ENCODE measurements at regions of chr14 and their contacts with region 1.

Region 1: GRCh38 chr14:21510735-21511657 is at the start of gene METTL3:
- DNase-seq: peak; percentile 96
- H3K4me3 Mint-ChIP-seq: peak within 1 kb of the TSS; percentile 96
- H3K27ac Mint-ChIP-seq: peak within 1 kb of the TSS; percentile 96
- H3K4me1 Mint-ChIP-seq: peaks cover 30% of the 10 kb centered on the region
- H3K27me3 Mint-ChIP-seq: no peaks in the 10 kb centered on the region
- total RNA-seq, gene METTL3: 60.6 TPM

Region 2: GRCh38 chr14:21383848-21384493 is 127.0 kb before region 1 on chr14 and contains the start of gene SUPT16H:
- CTCF ChIA-PET with region 1: no interaction called
- intact Hi-C with region 1: loop called (anchors 1 kb)
- DNase-seq: peak; percentile 97
- H3K4me3 Mint-ChIP-seq: peak within 1 kb of the TSS; percentile 98
- H3K27ac Mint-ChIP-seq: peak within 1 kb of the TSS; percentile 99
- H3K4me1 Mint-ChIP-seq: peaks cover 34% of the 10 kb centered on the region
- H3K27me3 Mint-ChIP-seq: no peaks in the 10 kb centered on the region
- total RNA-seq, gene SUPT16H: 164 to 165 TPM

Region 3: GRCh38 chr14:21437063-21437901 is 73.7 kb before region 1 on chr14:
- CTCF ChIA-PET with region 1: no interaction called
- intact Hi-C with region 1: loop called (anchors 1 kb)
- DNase-seq: peak; percentile 100
- H3K4me3 Mint-ChIP-seq: peak overlapping the region; percentile 84
- H3K27ac Mint-ChIP-seq: peak overlapping the region; percentile 90
- H3K4me1 Mint-ChIP-seq: peaks cover 52% of the 10 kb centered on the region
- H3K27me3 Mint-ChIP-seq: no peaks in the 10 kb centered on the region

Region 4: DNA sequence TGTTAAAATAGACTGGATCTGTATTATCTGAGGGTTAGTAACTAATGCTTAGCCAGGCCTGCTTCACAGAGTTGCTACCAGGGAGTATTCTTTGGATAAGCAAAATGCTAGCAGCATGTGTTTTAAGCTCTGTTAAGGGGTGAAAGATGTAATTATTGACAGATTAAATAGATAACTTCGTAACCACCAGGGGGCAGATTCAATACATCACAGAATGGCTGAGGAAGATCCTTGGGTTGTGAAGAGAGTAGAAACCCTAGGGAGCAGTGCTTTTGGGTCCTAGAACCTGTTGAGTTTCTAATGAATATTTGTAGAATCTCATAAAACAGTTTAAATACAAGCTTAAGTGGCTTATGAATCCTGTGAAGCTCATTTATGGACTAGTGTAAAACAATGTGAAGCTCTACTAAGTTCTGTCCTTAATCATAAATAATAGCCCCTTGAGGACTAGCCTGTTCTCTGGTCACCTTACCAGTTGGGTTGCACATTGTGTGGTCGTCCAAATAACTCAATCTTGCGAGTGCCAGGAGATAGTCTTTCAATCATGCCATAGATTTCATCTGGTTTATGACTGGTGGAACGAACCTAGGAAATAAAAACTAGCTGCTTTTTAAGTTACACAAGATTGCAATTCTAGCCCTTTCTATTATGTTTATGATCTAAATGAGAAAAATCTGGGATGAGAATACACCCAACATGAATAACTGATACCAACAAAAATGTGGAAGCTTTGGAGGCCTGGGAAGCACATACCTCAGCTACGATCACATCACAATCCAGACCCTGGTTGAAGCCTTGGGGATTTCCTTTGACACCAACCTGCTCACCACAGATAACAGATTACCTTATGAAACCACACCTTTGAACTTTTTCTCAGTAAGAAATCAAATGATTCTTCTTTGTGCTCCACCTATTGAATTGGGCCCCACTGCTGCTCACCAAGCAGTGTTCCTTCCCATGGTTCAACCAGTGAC is 12.2 kb before region 1 on chr14:
- CTCF ChIA-PET with region 1: interaction called, 44 read pairs
- intact Hi-C with region 1: no loop called
- DNase-seq: peak; percentile 32
- H3K4me3 Mint-ChIP-seq: no peak overlapping the region
- H3K27ac Mint-ChIP-seq: peak overlapping the region; percentile 51
- H3K4me1 Mint-ChIP-seq: peaks cover 18% of the 10 kb centered on the region
- H3K27me3 Mint-ChIP-seq: no peaks in the 10 kb centered on the region

Region 5: GRCh38 chr14:21557084-21557901 is 46.3 kb after region 1 on chr14:
- CTCF ChIA-PET with region 1: interaction called, 5 read pairs
- intact Hi-C with region 1: loop called (anchors 1 kb)
- DNase-seq: peak; percentile 91
- H3K4me3 Mint-ChIP-seq: peak overlapping the region; percentile 27
- H3K27ac Mint-ChIP-seq: no peak overlapping the region
- H3K4me1 Mint-ChIP-seq: peaks cover 6% of the 10 kb centered on the region
- H3K27me3 Mint-ChIP-seq: no peaks in the 10 kb centered on the region